Activated CD4-positive, alpha-beta memory T cell treated with anti-CD3 and anti-CD28 coated beads for 36 hours (primary cell): ENCODE measurements at regions of chr17 and their contacts with region 1.

Region 1: GRCh38 chr17:55238179-55238930 is 26.4 kb upstream of the HLF start:
- DNase-seq: peak; percentile 91
- H3K4me3 Mint-ChIP-seq: peak overlapping the region; percentile 81
- H3K27ac Mint-ChIP-seq: no peak overlapping the region
- H3K4me1 Mint-ChIP-seq: peaks cover 16% of the 10 kb centered on the region
- H3K27me3 Mint-ChIP-seq: peaks cover 12% of the 10 kb centered on the region

Region 2: GRCh38 chr17:55072898-55073297 is 165.5 kb before region 1 on chr17:
- CTCF ChIA-PET with region 1: no interaction called
- POLR2A ChIA-PET with region 1: no interaction called
- intact Hi-C with region 1: loop called (anchors 5 kb)
- DNase-seq: no peak
- H3K4me3 Mint-ChIP-seq: no peak overlapping the region
- H3K27ac Mint-ChIP-seq: peak overlapping the region; percentile 56
- H3K4me1 Mint-ChIP-seq: peaks cover 13% of the 10 kb centered on the region
- H3K27me3 Mint-ChIP-seq: no peaks in the 10 kb centered on the region

Region 3: DNA sequence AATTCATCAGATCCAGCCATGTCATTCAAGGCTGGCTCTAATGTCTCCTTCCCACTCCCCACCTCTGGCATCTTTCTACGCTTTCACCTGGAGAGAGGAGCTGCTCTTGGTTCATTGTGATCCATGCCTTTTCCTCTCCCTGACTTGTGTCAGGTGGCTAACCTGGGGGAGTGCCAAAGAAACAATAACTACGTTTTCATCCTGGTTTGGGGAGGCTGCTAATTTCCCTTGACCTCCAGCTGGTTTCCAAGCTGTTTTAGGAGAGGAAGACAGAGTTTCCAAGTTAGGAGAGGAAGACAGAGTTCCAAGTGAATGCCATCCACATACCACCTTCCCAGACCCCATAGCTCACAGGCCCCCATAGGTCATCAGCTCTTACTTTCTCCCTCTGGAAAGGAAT is 13.6 kb before region 1 on chr17:
- CTCF ChIA-PET with region 1: no interaction called
- POLR2A ChIA-PET with region 1: no interaction called
- intact Hi-C with region 1: no loop called
- DNase-seq: no peak
- H3K4me3 Mint-ChIP-seq: no peak overlapping the region
- H3K27ac Mint-ChIP-seq: no peak overlapping the region
- H3K4me1 Mint-ChIP-seq: no peaks in the 10 kb centered on the region
- H3K27me3 Mint-ChIP-seq: peaks cover 6% of the 10 kb centered on the region

Region 4: DNA sequence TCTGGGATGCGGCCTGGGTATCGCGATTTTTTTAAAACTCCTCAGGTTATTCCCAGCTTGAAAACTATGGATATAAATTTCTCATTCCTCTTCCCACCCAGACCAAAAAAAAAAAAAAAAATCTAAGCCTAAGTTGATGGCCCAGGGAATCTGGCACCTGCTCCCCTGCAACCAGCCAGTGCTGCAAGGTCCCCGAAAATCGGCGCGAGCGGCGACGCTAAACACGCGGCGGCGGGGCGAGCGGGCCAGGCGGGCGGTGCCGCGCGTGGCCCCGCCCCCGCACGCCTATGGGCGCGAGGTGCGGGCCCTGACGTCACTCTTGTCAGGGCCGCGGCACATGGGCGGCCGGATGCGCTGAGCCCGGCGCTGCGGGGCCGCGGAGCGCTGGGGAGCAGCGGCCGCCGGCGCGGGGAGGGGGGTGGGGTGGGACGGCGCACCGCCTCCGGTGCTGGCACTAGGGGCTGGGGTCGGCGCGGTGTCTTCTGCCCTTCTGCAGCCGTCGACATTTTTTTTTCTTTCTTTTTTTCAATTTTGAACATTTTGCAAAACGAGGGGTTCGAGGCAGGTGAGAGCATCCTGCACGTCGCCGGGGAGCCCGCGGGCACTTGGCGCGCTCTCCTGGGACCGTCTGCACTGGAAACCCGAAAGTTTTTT is 26.4 kb after region 1 on chr17 and contains the start of gene HLF:
- CTCF ChIA-PET with region 1: interaction called, 17 read pairs
- POLR2A ChIA-PET with region 1: interaction called, 8 read pairs
- intact Hi-C with region 1: loop called (anchors 1 kb)
- DNase-seq: peak; percentile 81
- H3K4me3 Mint-ChIP-seq: peak within 1 kb of the TSS; percentile 62
- H3K27ac Mint-ChIP-seq: no peak within 1 kb of the TSS
- H3K4me1 Mint-ChIP-seq: peaks cover 15% of the 10 kb centered on the region
- H3K27me3 Mint-ChIP-seq: peaks cover 18% of the 10 kb centered on the region
- total RNA-seq, gene HLF: 3.4 to 3.5 TPM

Region 5: DNA sequence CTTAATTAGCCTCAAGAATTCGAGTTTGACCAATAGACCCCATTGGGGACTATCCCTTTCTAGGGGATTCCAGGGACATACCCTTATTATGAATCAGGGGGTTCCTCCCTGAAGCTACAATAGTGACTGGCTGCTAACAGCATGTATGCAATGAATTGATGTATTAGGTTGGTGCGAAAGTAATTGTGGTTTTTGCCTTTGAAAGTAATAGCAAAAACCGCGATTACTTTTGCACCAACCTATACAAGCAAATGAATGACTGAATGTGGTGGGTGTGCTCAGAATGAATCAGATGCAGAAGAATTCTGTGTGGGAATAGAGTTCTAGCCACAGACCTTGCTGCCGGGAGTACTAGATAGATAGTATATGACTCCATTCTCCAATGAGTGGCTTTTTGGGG is 103.1 kb after region 1 on chr17:
- CTCF ChIA-PET with region 1: interaction called, 4 read pairs
- POLR2A ChIA-PET with region 1: interaction called, 3 read pairs
- intact Hi-C with region 1: loop called (anchors 1 kb)
- DNase-seq: peak; percentile 30
- H3K4me3 Mint-ChIP-seq: no peak overlapping the region
- H3K27ac Mint-ChIP-seq: no peak overlapping the region
- H3K4me1 Mint-ChIP-seq: peaks cover 46% of the 10 kb centered on the region
- H3K27me3 Mint-ChIP-seq: peaks cover 25% of the 10 kb centered on the region

Region 6: DNA sequence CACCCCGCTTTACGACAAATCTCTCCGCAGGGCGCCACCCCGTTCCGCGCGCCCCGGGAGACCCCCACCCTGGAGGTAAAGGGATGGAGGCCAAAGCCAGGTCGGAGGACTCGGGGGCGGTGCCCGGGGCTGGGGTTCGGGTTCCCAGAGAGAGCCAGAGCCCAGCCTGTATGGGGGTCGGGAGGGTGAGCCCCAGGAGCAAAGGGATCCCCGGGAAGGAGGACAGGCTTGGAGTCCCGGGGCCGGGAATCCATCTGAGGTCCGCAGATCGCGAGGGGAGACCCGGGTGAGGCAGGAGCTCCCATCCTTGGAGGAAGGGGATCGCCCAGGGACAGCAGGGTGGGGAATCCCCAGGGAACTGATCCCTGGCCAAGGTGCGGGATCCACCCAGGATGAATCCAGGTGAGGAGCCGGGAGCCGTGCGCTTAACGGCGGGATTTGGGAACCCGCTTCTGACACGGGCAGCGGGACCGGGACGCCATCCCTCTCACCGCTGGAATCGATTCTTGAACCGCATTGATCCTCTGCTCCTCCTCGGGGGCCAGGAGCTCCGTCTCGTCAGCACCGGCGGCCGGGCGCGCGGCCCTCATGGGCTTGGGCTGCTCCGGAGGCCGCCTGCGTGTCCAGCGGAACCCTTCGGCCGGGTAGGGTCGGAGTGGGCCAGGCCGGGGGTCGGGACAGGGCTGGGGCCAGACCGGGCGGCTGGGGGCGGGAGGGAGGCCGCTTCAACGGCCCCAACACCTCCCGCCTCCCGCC is 183.0 kb after region 1 on chr17 and contains the start of gene MMD:
- CTCF ChIA-PET with region 1: no interaction called
- POLR2A ChIA-PET with region 1: no interaction called
- intact Hi-C with region 1: loop called (anchors 10 kb)
- DNase-seq: no peak
- H3K4me3 Mint-ChIP-seq: peak within 1 kb of the TSS; percentile 89
- H3K27ac Mint-ChIP-seq: peak within 1 kb of the TSS; percentile 93
- H3K4me1 Mint-ChIP-seq: peaks cover 42% of the 10 kb centered on the region
- H3K27me3 Mint-ChIP-seq: peaks cover 19% of the 10 kb centered on the region
- total RNA-seq, gene MMD: 22.1 to 24.2 TPM